Mammary epithelial cell (primary cell): ENCODE measurements at regions of chr4 and their contacts with region 1.

Region 1: GRCh38 chr4:125489952-125490690 is 175.4 kb downstream of the FAT4 start:
- DNase-seq: no peak
- H3K4me3 ChIP-seq: no peak overlapping the region
- H3K27ac ChIP-seq: no peak overlapping the region
- H3K4me1 ChIP-seq: no peaks in the 10 kb centered on the region
- H3K27me3 ChIP-seq: no peaks in the 10 kb centered on the region
- CTCF ChIP-seq: no peak

Region 2: DNA sequence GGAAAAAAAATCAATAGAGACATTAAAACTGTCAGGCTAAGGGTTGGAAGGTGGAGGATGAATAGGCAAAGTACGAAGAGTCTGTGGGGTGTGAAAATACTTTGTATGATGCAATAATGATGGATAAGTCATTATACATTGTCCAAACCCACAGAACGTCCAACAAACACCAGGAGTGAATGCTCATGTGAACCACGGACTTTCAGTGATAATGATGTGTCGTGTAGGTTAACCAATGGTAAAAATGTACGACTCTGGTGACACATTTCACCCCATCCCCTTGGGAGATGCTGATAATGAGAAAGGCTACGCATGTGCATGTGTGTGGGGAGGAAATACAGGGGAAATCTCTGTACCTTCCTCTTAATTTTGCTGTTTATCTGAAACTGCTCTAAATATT is 489.8 kb after region 1 on chr4:
- CTCF ChIA-PET with region 1: no interaction called
- dilution Hi-C with region 1: no loop called
- in situ Hi-C with region 1: no loop called
- intact Hi-C with region 1: loop called (anchors 5 kb)
- DNase-seq: no peak
- H3K4me3 ChIP-seq: no peak overlapping the region
- H3K27ac ChIP-seq: no peak overlapping the region
- H3K4me1 ChIP-seq: no peaks in the 10 kb centered on the region
- H3K27me3 ChIP-seq: no peaks in the 10 kb centered on the region
- CTCF ChIP-seq: no peak